Activated T-helper 2 cell treated with anti-CD3 and anti-CD28 coated beads, Interferon-gamma antibody, Interleukin-2, Interleukin-4, amounts not matched to agents 10 μg/mL and 5 μg/mL and 100 μg/mL, durations not matched to agents 14 hours and 24 hours and 36 hours (primary cell): ENCODE measurements at regions of chr5 and their contacts with region 1.

Region 1: DNA sequence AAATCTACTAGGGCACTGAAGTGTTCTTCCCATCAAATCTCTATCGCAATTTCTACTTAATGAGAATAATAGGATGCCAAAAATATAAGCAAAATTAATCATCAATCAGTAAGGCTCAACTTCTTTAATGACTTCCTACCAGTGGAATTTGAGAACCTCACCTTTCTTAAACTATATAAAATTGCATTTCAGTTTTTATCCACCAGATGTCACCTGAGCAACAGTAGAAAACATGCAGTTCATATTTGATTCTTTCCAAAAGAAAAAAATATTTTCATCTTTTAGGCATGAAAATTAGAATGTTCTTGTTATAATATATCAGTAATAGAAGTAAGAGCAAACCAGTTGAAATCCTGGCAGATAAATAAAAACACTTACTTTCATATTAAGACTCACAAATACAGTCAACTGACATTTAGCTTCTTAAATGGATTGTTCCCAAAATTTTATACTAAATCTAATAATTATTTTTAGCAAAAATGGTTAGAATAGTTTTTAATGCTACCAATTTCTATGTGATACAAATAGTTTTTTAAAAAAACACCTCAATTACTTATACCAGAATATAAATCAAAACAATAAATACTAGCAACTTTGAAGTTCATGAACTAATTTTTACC is 13.4 kb upstream of the CCDC112 start:
- DNase-seq: no peak
- H3K4me3 Mint-ChIP-seq: no peak overlapping the region
- H3K27ac Mint-ChIP-seq: no peak overlapping the region
- H3K4me1 Mint-ChIP-seq: no peaks in the 10 kb centered on the region
- H3K27me3 Mint-ChIP-seq: peaks cover 50% of the 10 kb centered on the region

Region 2: DNA sequence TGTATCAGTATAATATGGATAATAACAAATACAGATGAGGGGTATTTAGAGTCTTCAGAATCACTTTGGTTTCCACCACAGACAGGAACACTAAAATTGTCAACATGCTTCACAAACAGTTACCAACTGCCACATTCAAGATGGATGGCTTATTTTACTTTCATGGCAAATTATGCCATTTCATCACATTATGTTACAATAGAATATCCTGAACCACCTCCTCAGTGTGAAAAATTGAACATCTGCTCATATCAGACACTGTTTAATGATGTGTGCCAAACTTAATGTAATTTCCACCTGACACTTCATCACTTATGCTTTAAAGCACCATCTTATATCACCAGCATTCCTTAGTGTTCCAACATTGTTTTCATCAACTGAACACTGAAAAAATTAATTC is 590.6 kb before region 1 on chr5:
- intact Hi-C with region 1: no loop called
- DNase-seq: no peak
- H3K4me3 Mint-ChIP-seq: no peak overlapping the region
- H3K27ac Mint-ChIP-seq: no peak overlapping the region
- H3K4me1 Mint-ChIP-seq: no peaks in the 10 kb centered on the region
- H3K27me3 Mint-ChIP-seq: no peaks in the 10 kb centered on the region

Region 3: GRCh38 chr5:115136294-115136693 is 173.6 kb before region 1 on chr5:
- intact Hi-C with region 1: no loop called
- DNase-seq: no peak
- H3K4me3 Mint-ChIP-seq: no peak overlapping the region
- H3K27ac Mint-ChIP-seq: no peak overlapping the region
- H3K4me1 Mint-ChIP-seq: peaks cover 2% of the 10 kb centered on the region
- H3K27me3 Mint-ChIP-seq: peaks cover 15% of the 10 kb centered on the region

Region 4: GRCh38 chr5:115450741-115451140 is 140.9 kb after region 1 on chr5:
- intact Hi-C with region 1: no loop called
- DNase-seq: no peak
- H3K4me3 Mint-ChIP-seq: no peak overlapping the region
- H3K27ac Mint-ChIP-seq: no peak overlapping the region
- H3K4me1 Mint-ChIP-seq: no peaks in the 10 kb centered on the region
- H3K27me3 Mint-ChIP-seq: peaks cover 4% of the 10 kb centered on the region

Region 5: DNA sequence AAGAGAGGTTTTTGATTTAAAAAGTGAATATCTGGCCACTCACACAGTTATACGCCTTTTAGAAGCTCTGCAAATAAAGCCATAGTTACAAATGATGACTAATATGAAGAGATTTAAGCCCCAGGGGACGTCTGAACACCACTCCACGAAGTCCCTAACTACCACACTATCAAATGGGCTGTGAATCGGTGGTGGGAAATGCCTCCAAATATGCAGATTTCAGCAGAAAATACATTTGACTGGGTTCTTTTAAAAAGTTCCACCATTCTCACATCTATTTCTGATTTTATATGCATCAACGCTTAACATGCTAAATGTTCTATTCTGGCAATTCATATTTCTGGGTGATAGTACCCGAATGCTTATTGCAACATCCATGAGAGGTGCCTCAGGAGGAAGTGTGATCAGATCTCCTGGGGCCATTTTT is 269.9 kb after region 1 on chr5:
- intact Hi-C with region 1: loop called (anchors 1 kb)
- DNase-seq: no peak
- H3K4me3 Mint-ChIP-seq: no peak overlapping the region
- H3K27ac Mint-ChIP-seq: no peak overlapping the region
- H3K4me1 Mint-ChIP-seq: no peaks in the 10 kb centered on the region
- H3K27me3 Mint-ChIP-seq: peaks cover 12% of the 10 kb centered on the region

Region 6: GRCh38 chr5:115586601-115587048 is 276.8 kb after region 1 on chr5:
- intact Hi-C with region 1: loop called (anchors 1 kb)
- DNase-seq: no peak
- H3K4me3 Mint-ChIP-seq: no peak overlapping the region
- H3K27ac Mint-ChIP-seq: no peak overlapping the region
- H3K4me1 Mint-ChIP-seq: no peaks in the 10 kb centered on the region
- H3K27me3 Mint-ChIP-seq: peaks cover 15% of the 10 kb centered on the region

Region 7: GRCh38 chr5:116068028-116068632 is 758.3 kb after region 1 on chr5:
- intact Hi-C with region 1: loop called (anchors 10 kb)
- DNase-seq: no peak
- H3K4me3 Mint-ChIP-seq: no peak overlapping the region
- H3K27ac Mint-ChIP-seq: no peak overlapping the region
- H3K4me1 Mint-ChIP-seq: no peaks in the 10 kb centered on the region
- H3K27me3 Mint-ChIP-seq: peaks cover 55% of the 10 kb centered on the region